Activated CD4-positive, alpha-beta memory T cell treated with anti-CD3 and anti-CD28 coated beads, Interleukin-2, amount 10 ng/mL, durations not matched to agents 7 days and 5 days (primary cell): ENCODE measurements at regions of chr6 and their contacts with region 1.

Region 1: DNA sequence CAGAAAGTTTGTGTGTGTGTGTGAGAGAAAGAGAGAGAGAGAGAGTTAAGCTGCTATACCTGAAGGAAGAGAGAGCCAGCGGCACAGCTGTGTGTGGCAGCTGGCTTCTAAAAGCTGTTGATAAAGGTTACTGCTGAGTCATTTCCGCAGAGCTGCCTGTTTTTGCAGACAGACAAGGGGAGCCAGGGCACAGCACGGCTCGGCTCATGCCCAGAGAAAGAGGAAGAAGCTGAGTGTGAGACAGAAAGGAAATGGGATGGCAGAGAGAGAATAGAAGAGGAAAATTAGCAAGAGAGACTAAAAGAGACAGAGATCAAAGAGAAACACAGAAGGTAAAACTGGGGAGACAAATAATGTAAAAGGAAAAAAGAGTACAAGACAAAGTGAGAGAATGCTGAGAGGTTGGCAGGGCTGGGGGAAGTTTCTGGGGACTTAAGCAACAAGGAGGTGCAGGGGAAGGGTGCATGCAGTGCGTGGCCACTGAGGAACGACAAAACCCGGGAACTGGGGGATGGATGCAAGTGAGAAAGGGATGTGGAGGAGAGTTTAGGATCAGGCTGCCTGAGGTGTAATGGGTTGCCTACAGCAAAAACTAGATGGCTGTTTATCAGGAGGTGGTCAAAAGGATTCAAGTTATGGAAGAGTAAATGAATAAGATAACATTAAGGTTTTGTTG is 22.7 kb downstream of the HLA-A start:
- DNase-seq: peak; percentile 86
- H3K4me3 Mint-ChIP-seq: peak overlapping the region; percentile 93
- H3K27ac Mint-ChIP-seq: peak overlapping the region; percentile 97
- H3K4me1 Mint-ChIP-seq: peaks cover 41% of the 10 kb centered on the region
- H3K27me3 Mint-ChIP-seq: no peaks in the 10 kb centered on the region

Region 2: GRCh38 chr6:29847871-29848630 is 117.0 kb before region 1 on chr6:
- CTCF ChIA-PET with region 1: interaction called, 12 read pairs
- POLR2A ChIA-PET with region 1: interaction called, 17 read pairs
- DNase-seq: peak; percentile 88
- H3K4me3 Mint-ChIP-seq: no peak overlapping the region
- H3K27ac Mint-ChIP-seq: no peak overlapping the region
- H3K4me1 Mint-ChIP-seq: peaks cover 45% of the 10 kb centered on the region
- H3K27me3 Mint-ChIP-seq: peaks cover 56% of the 10 kb centered on the region

Region 3: GRCh38 chr6:29926413-29927274 is 38.4 kb before region 1 on chr6:
- CTCF ChIA-PET with region 1: no interaction called
- POLR2A ChIA-PET with region 1: interaction called, 17 read pairs
- DNase-seq: peak; percentile 91
- H3K4me3 Mint-ChIP-seq: peak overlapping the region; percentile 84
- H3K27ac Mint-ChIP-seq: peak overlapping the region; percentile 85
- H3K4me1 Mint-ChIP-seq: peaks cover 36% of the 10 kb centered on the region
- H3K27me3 Mint-ChIP-seq: no peaks in the 10 kb centered on the region

Region 4: GRCh38 chr6:29976588-29977424 is 11.8 kb after region 1 on chr6:
- CTCF ChIA-PET with region 1: interaction called, 4 read pairs
- POLR2A ChIA-PET with region 1: interaction called, 17 read pairs
- DNase-seq: peak; percentile 68
- H3K4me3 Mint-ChIP-seq: peak overlapping the region; percentile 75
- H3K27ac Mint-ChIP-seq: no peak overlapping the region
- H3K4me1 Mint-ChIP-seq: peaks cover 51% of the 10 kb centered on the region
- H3K27me3 Mint-ChIP-seq: peaks cover 68% of the 10 kb centered on the region

Region 5: GRCh38 chr6:29989211-29989610 is 24.2 kb after region 1 on chr6:
- CTCF ChIA-PET with region 1: no interaction called
- POLR2A ChIA-PET with region 1: no interaction called
- DNase-seq: no peak
- H3K4me3 Mint-ChIP-seq: no peak overlapping the region
- H3K27ac Mint-ChIP-seq: no peak overlapping the region
- H3K4me1 Mint-ChIP-seq: no peaks in the 10 kb centered on the region
- H3K27me3 Mint-ChIP-seq: peaks cover 42% of the 10 kb centered on the region

Region 6: DNA sequence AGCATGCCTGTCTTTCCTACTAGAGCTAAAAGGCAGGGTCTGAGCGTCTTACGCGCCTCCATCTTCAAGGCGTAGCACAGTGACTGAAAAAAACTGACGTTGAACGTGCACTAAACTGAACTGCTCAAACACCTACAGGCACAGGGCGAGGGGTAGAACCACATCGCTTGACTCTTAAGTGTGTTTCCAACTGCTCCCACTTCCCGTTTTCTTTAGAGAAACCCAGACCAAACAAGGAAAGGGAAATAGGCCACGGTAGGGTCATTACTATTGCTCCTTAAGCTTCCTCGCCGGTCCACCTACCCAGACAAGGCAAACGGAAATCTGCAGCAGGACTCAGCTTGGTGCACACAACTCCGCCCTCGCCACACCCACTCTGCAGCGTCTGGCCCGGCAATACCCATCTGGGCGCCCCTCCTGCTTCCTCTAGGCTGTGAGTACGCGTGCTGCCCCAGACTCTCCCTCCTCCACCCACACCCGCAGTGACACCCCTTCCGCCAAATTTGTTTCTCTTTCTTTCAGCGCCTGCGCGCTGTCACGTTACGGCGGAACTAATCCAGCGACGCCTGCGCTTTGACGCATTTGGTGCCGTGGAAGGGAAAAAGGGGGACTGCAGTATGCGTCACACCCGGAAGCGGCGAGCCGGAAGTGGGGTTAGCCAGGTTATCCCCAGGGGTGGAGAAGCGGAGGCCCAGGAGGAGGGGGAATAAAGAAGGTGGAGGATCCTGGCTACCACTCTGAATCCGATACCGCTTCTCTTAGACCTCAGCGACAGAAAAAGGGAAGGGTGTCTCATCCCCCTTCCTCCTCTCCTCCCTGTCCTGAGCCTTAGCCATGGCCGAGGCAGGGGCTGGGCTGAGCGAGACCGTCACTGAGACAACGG is 101.8 kb after region 1 on chr6 and contains the start of gene PPP1R11:
- CTCF ChIA-PET with region 1: no interaction called
- POLR2A ChIA-PET with region 1: interaction called, 13 read pairs
- DNase-seq: peak; percentile 99
- H3K4me3 Mint-ChIP-seq: peak within 1 kb of the TSS; percentile 93
- H3K27ac Mint-ChIP-seq: peak within 1 kb of the TSS; percentile 94
- H3K4me1 Mint-ChIP-seq: peaks cover 63% of the 10 kb centered on the region
- H3K27me3 Mint-ChIP-seq: peaks cover 8% of the 10 kb centered on the region
- total RNA-seq, gene PPP1R11: 62.5 to 62.6 TPM